ENCODE measurements at regions of chr17 and their contacts with region 1.

Region 1: DNA sequence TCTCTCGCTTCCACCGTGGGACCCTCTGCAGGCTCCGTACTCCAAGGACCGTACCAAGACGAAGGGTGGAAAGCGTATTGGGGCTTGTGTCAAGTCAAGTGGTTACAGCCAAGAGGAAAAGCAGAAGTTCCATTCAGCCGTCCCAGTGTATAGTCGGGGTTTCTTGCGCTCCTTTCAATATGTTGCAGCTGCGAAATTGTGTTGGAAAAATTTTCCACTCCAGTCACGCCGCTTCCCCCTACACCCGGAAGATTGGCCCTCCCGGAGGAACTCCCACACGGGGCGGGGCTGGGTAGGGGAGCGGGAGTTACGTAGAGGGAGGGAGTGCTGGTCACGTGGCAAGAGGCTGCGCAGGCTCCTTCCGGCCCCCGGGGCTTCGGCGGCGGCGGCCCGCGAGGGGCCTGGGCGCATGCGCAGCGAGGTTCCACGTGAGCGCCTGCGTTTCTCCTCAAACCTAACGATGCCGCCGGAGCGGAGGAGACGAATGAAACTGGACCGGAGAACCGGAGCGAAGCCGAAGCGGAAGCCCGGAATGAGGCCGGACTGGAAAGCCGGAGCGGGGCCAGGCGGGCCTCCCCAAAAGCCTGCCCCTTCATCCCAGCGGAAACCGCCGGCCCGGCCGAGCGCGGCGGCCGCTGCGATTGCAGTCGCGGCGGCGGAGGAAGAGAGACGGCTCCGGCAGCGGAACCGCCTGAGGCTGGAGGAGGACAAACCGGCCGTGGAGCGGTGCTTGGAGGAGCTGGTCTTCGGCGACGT is at the start of gene UTP18:
- DNase-seq: peak; percentile 96
- H3K4me3 Mint-ChIP-seq: peak within 1 kb of the TSS; percentile 88
- H3K27ac Mint-ChIP-seq: peak within 1 kb of the TSS; percentile 98
- H3K4me1 Mint-ChIP-seq: peaks cover 66% of the 10 kb centered on the region
- H3K27me3 Mint-ChIP-seq: no peaks in the 10 kb centered on the region
- total RNA-seq, gene UTP18: 54.4 to 54.5 TPM

Region 2: GRCh38 chr17:50547035-50547735 is 713.1 kb before region 1 on chr17 and contains the start of gene SPATA20:
- CTCF ChIA-PET with region 1: no interaction called
- intact Hi-C with region 1: no loop called
- DNase-seq: peak; percentile 92
- H3K4me3 Mint-ChIP-seq: peak within 1 kb of the TSS; percentile 74
- H3K27ac Mint-ChIP-seq: peak within 1 kb of the TSS; percentile 67
- H3K4me1 Mint-ChIP-seq: peaks cover 9% of the 10 kb centered on the region
- H3K27me3 Mint-ChIP-seq: peaks cover 2% of the 10 kb centered on the region
- total RNA-seq, gene SPATA20: 15.8 to 16.1 TPM

Region 3: GRCh38 chr17:51000835-51001638 is 259.3 kb before region 1 on chr17:
- CTCF ChIA-PET with region 1: interaction called, 3 read pairs
- intact Hi-C with region 1: loop called (anchors 1 kb)
- DNase-seq: peak; percentile 18
- H3K4me3 Mint-ChIP-seq: no peak overlapping the region
- H3K27ac Mint-ChIP-seq: no peak overlapping the region
- H3K4me1 Mint-ChIP-seq: no peaks in the 10 kb centered on the region
- H3K27me3 Mint-ChIP-seq: no peaks in the 10 kb centered on the region

Region 4: GRCh38 chr17:51166197-51166986 is 93.9 kb before region 1 on chr17 and contains the start of gene NME2:
- CTCF ChIA-PET with region 1: interaction called, 3 read pairs
- intact Hi-C with region 1: loop called (anchors 1 kb)
- DNase-seq: peak; percentile 50
- H3K4me3 Mint-ChIP-seq: peak within 1 kb of the TSS; percentile 81
- H3K27ac Mint-ChIP-seq: peak within 1 kb of the TSS; percentile 90
- H3K4me1 Mint-ChIP-seq: peaks cover 29% of the 10 kb centered on the region
- H3K27me3 Mint-ChIP-seq: no peaks in the 10 kb centered on the region
- total RNA-seq, gene NME2: 1,086 to 1,094 TPM

Region 5: DNA sequence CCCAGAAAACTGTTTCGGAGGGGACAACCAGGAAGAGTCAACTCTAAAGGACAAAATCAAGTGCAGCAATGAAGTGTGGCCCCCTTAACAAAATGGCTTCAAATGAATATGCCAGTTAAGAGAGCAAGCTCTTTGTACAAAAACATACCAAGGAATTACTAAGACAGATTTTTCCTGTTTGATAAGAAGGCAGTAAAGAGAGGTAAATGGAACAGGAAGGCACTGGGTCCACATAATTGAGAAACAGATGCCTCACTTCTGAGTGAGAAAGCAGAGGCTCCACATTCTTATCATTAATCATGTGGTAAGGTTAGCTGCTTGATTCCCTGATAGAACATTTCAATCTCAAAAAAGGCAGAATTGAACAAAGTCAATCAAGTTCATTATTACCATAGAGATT is 45.4 kb before region 1 on chr17:
- CTCF ChIA-PET with region 1: no interaction called
- intact Hi-C with region 1: no loop called
- DNase-seq: no peak
- H3K4me3 Mint-ChIP-seq: no peak overlapping the region
- H3K27ac Mint-ChIP-seq: no peak overlapping the region
- H3K4me1 Mint-ChIP-seq: no peaks in the 10 kb centered on the region
- H3K27me3 Mint-ChIP-seq: no peaks in the 10 kb centered on the region

Region 6: GRCh38 chr17:51279183-51279582 is 18.9 kb after region 1 on chr17:
- CTCF ChIA-PET with region 1: no interaction called
- intact Hi-C with region 1: loop called (anchors 2 kb)
- DNase-seq: no peak
- H3K4me3 Mint-ChIP-seq: no peak overlapping the region
- H3K27ac Mint-ChIP-seq: no peak overlapping the region
- H3K4me1 Mint-ChIP-seq: peaks cover 10% of the 10 kb centered on the region
- H3K27me3 Mint-ChIP-seq: no peaks in the 10 kb centered on the region

Region 7: DNA sequence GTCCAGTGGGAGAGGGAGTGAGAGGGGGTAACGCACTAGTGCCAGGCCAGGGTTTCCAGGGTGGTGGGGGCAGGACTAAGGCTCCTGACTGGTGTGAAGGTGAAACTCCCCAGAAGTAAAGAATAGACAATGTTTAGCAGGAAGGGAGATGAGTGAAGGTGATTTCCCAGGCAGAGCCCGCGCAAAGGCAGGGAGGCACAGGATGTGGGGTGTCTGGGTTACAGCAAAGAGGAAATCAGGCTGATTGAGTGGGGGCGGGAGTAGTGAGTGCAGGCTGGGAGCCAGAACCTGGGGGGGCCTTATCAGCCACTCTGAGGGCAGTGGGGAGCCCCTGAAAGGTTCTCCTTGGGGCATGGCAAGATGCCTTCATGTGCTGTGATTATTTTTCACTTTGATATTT is 167.6 kb after region 1 on chr17:
- CTCF ChIA-PET with region 1: no interaction called
- intact Hi-C with region 1: loop called (anchors 1 kb)
- DNase-seq: peak; percentile 92
- H3K4me3 Mint-ChIP-seq: peak overlapping the region; percentile 48
- H3K27ac Mint-ChIP-seq: peak overlapping the region; percentile 93
- H3K4me1 Mint-ChIP-seq: peaks cover 65% of the 10 kb centered on the region
- H3K27me3 Mint-ChIP-seq: no peaks in the 10 kb centered on the region